ENCODE measurements at regions of chr5 and their contacts with region 1.

Region 1: DNA sequence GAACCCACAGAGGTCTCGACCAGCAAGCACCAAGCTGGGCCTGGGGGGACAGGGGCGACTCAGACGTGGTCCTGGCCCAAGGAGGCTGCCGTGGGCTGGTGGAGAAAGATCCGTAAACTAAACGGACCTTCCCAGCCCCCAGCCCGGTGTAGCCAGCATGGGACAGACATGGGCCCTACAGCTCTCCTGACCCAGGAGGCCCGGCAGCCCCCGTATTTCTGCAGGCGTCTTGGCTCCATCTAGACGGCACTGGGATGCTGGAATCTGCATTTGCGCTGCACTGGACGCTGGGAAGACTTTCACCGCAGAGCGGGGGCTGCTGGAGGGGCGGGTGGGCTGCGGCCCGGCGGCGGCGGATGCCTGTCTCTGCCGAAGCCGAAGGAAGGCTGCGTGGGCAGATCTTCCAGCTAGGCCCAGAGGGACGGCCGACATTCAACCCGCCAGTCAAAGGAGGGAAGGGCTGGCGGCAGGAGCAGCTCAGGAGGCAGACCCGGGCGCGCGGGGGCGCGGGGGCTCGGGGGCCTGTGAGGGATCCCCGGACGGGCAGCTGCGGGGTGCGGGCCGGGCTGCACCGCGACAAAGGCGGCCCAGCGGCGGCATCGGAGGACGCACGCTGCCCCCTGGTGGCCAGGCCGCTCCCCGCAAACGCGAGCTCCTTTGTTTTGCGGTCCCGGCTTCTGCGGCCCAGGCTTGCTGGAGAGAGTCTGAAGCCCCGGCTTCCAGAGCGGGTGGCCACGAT is 266.2 kb downstream of the NSG2 start:
- DNase-seq: peak; percentile 95
- H3K4me3 ChIP-seq: peak overlapping the region; percentile 39 to 62
- H3K27ac ChIP-seq: peak overlapping the region in 1 of 2 experiments; percentile 84; a peak in 2 of 4 replicates
- H3K4me1 ChIP-seq: peaks cover 0 to 38% of the 10 kb centered on the region in 2 experiments; a peak in 1 of 4 replicates
- H3K27me3 ChIP-seq: no peaks in the 10 kb centered on the region
- CTCF ChIP-seq: peak; percentile 77
- EP300 ChIP-seq: no peak; a peak in 1 of 4 replicates
- RAD21 ChIP-seq: peak; percentile 88

Region 2: GRCh38 chr5:174056064-174056847 is 255.4 kb before region 1 on chr5:
- CTCF ChIA-PET with region 1: interaction called, 35 read pairs
- POLR2A ChIA-PET with region 1: interaction called, 3 read pairs
- DNase-seq: no peak
- H3K4me3 ChIP-seq: no peak overlapping the region
- H3K27ac ChIP-seq: no peak overlapping the region; a peak in 1 of 4 replicates
- H3K4me1 ChIP-seq: peaks cover 0 to 13% of the 10 kb centered on the region in 2 experiments; a peak in 2 of 4 replicates
- H3K27me3 ChIP-seq: no peaks in the 10 kb centered on the region
- CTCF ChIP-seq: peak; percentile 33; the same call in 1 of the 2 replicates
- EP300 ChIP-seq: no peak
- RAD21 ChIP-seq: no peak

Region 3: GRCh38 chr5:174097518-174098185 is 214.0 kb before region 1 on chr5:
- CTCF ChIA-PET with region 1: interaction called, 11 read pairs
- POLR2A ChIA-PET with region 1: no interaction called
- DNase-seq: no peak
- H3K4me3 ChIP-seq: no peak overlapping the region
- H3K27ac ChIP-seq: peak overlapping the region in 1 of 2 experiments; percentile 1; a peak in 1 of 4 replicates
- H3K4me1 ChIP-seq: peaks cover 0 to 59% of the 10 kb centered on the region in 2 experiments; a peak in 2 of 4 replicates
- H3K27me3 ChIP-seq: no peaks in the 10 kb centered on the region
- CTCF ChIP-seq: no peak
- EP300 ChIP-seq: no peak
- RAD21 ChIP-seq: no peak

Region 4: DNA sequence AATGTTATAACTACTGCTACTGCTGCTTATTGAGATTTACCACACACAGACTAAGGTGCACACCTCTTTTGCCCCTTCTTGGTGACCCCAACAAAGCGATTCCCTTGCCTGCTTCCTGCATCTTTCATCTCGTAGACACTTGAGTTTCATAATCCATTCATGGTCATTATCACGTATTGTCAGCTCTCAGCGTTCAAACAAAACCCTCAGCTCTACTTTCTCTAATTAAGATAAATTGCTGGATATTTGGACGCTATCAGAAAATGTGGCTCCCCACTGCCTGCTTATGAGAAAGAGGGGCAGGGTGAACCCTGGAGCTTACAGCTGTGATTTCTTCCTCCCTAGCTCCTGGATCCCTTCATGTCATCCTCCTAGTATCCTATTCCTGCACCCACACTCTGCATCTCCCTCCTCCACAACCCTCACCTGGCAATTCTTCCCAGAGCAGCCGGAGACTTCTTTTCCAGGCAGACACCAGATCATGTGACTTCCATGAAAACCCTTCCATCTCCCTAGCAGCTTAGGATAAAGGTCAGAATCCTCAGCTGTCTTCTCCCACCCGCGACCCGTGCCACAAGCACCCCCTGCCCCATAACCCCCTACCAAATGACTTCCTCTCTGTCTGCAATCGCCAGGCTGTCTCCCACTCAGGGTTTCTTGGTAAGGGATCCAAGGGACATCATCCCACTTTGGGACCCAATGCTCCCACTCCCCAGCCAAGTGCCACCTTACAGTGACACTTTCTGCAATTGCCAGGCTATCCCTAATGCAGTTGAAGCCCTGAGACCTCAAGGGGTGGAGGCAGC is 119.6 kb before region 1 on chr5:
- CTCF ChIA-PET with region 1: interaction called, 11 read pairs
- POLR2A ChIA-PET with region 1: interaction called, 5 read pairs
- DNase-seq: no peak
- H3K4me3 ChIP-seq: no peak overlapping the region
- H3K27ac ChIP-seq: peak overlapping the region in 1 of 2 experiments; percentile 98; a peak in 2 of 4 replicates
- H3K4me1 ChIP-seq: peaks cover 0 to 63% of the 10 kb centered on the region in 2 experiments; a peak in 2 of 4 replicates
- H3K27me3 ChIP-seq: no peaks in the 10 kb centered on the region
- CTCF ChIP-seq: no peak
- EP300 ChIP-seq: no peak
- RAD21 ChIP-seq: no peak

Region 5: DNA sequence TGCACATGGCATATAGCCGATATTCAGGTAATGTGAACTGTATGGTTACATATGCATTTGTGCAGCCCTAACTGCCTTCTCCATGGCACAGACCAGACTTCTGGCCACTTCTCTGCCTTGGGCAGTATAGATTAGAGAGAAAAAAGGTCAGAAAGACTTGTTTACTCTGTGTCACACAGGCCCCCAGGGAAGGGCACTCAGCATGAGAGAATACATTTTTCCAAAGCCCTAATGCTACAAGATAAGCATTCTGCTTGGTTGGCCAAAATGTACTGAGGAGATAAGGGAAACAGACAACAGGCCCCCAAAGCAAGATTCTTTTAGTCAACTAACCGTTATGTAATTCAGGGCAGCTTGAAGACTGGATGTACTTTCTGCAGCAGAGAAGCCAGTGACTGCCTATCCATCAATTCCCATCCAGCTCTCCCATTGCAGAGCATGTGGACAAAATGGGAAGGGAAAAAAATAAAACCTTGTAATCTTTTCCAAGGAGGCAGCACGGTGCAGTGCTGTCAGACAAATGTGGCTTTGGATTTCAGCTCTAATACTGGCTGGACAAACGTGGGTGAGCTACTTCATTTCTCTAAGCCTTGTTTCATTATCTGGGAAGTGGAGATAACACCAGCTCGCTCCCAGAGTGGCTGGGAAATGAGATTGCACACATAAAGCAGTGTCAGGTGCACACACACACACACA is 60.2 kb before region 1 on chr5:
- CTCF ChIA-PET with region 1: interaction called, 11 read pairs
- POLR2A ChIA-PET with region 1: no interaction called
- DNase-seq: peak; percentile 59
- H3K4me3 ChIP-seq: no peak overlapping the region
- H3K27ac ChIP-seq: peak overlapping the region; percentile 22 to 96; a peak in 3 of 4 replicates
- H3K4me1 ChIP-seq: peaks cover 0 to 22% of the 10 kb centered on the region in 2 experiments; a peak in 2 of 4 replicates
- H3K27me3 ChIP-seq: no peaks in the 10 kb centered on the region
- CTCF ChIP-seq: no peak
- EP300 ChIP-seq: peak; percentile 33 to 97; a peak in 2 of 4 replicates
- RAD21 ChIP-seq: peak; percentile 24